ENCODE measurements at regions of chr14 and their contacts with region 1.

Region 1: GRCh38 chr14:64294672-64295413 is 672 bp upstream of the ESR2 start:
- DNase-seq: peak; percentile 90
- H3K4me3 ChIP-seq: peak overlapping the region; percentile 45
- H3K27ac ChIP-seq: no peak overlapping the region
- H3K4me1 ChIP-seq: peaks cover 28% of the 10 kb centered on the region
- CTCF ChIP-seq: peak; percentile 98

Region 2: DNA sequence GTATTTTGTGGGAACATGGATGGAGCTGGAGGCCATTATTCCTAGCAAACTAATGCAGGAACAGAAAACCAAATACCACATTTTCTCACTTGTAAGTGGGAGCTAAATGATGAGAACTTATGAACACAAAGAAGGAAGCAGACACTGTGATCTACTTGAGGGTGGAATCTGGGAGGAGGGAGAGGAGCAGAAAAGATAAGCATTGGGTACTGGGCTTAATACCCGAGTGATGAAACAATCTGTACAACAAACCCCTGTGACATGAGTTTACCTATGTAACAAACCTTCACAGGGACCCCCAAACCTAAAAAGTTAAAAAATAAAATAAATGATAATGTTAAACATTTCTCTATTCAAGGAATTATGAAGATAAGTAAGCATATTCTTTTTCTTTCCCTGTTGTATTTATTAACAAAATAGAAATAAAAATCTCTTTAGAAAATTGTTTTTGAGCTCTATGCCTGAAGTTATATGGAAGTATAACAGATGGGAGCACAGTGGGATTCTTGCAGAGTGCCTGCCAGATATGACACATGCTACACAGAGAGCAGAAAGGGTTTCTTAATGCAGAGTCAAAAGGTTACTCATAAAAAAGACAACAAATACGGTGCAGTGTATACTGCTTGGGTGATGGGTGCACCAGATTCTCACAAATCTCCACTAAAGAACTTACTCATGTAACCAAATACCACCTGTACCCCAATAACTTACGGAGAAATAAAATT is 494.0 kb before region 1 on chr14:
- CTCF ChIA-PET with region 1: no interaction called
- POLR2A ChIA-PET with region 1: interaction called, 6 read pairs
- intact Hi-C with region 1: loop called (anchors 2 kb)
- DNase-seq: no peak
- H3K4me3 ChIP-seq: no peak overlapping the region
- H3K27ac ChIP-seq: no peak overlapping the region
- H3K4me1 ChIP-seq: peaks cover 9% of the 10 kb centered on the region
- CTCF ChIP-seq: no peak

Region 3: GRCh38 chr14:64137657-64138290 is 157.1 kb before region 1 on chr14:
- CTCF ChIA-PET with region 1: no interaction called
- POLR2A ChIA-PET with region 1: no interaction called
- intact Hi-C with region 1: loop called (anchors 2 kb)
- DNase-seq: peak; percentile 11
- H3K4me3 ChIP-seq: no peak overlapping the region
- H3K27ac ChIP-seq: no peak overlapping the region
- H3K4me1 ChIP-seq: no peaks in the 10 kb centered on the region
- CTCF ChIP-seq: peak; percentile 61; the same call in 1 of the 2 replicates

Region 4: GRCh38 chr14:64184103-64184729 is 110.6 kb before region 1 on chr14:
- CTCF ChIA-PET with region 1: no interaction called
- POLR2A ChIA-PET with region 1: no interaction called
- intact Hi-C with region 1: no loop called
- DNase-seq: no peak
- H3K4me3 ChIP-seq: no peak overlapping the region
- H3K27ac ChIP-seq: no peak overlapping the region
- H3K4me1 ChIP-seq: no peaks in the 10 kb centered on the region
- CTCF ChIP-seq: no peak

Region 5: DNA sequence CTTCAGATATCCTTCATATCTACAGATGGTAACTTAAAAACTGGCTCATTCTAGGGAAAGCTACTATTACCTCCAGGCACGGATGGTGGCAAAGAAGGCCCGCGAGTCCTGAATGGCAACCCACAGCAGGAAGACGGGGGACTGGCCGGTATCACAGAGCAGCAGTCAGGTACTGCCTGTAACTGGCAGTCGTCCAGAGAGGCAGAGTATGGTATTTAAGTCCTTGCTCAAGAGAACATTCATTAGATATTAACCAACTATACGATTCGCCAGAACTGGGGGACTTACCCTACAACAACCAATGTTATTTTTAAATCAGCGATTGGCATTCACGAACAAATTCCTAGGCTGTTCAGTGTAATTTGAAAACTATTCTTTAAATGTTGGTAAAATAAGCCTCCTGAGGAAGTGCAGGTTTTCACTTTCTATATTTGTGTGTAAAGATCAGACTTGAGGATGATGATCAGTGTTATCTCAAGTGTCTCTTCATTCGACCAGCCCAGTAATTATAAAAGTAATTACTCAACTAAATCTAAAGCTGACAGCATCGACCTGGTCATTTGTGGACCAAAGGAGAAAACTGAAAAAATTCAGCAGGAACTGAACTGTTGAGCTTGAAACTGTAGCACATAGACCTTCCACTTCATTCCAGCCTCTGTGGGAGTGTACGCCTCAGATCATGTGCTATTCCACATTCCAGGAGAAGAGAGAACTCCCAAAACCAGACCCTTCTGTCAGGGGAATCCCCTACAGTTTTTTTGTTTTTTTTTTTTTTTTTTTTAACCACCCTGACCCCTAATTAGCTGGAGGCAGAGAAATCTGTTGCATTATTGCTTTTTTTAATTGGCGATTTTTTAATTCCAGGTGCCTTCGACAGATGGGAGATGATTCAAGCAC is 76.3 kb before region 1 on chr14:
- CTCF ChIA-PET with region 1: no interaction called
- POLR2A ChIA-PET with region 1: no interaction called
- intact Hi-C with region 1: loop called (anchors 5 kb)
- DNase-seq: no peak
- H3K4me3 ChIP-seq: no peak overlapping the region
- H3K27ac ChIP-seq: peak overlapping the region; percentile 56
- H3K4me1 ChIP-seq: peaks cover 23% of the 10 kb centered on the region
- CTCF ChIP-seq: no peak

Region 6: DNA sequence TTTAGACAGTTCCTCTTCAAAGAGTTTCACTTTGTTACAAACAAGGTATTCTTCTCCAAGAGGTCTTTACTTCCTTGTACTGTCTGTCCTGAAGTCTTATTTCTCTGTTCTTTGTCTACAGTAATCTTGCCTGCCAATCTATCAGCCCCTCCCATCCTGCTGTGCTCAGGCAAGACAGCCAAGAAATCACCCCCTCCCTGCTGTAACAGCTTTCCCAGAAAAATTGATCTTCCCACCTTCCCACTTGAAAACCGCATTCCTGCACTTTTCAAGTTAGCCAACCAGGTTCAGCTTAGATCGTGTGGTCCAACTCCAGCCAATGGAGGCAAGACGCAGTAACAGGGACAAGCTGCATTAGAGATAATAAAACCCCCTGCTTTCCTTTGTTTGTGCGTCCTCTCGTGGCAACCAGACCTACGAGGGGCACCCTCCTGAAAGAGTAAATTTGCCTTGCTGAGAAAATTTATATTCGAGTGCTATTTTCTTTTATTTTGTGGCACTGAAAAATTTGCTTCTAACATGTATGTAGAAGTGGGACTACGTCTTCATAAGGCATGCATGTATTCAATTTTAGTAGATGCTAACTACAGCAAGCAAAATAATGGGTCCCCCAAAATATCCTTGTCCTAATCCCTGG is 45.8 kb after region 1 on chr14:
- CTCF ChIA-PET with region 1: no interaction called
- POLR2A ChIA-PET with region 1: no interaction called
- intact Hi-C with region 1: no loop called
- DNase-seq: peak; percentile 43
- H3K4me3 ChIP-seq: no peak overlapping the region
- H3K27ac ChIP-seq: no peak overlapping the region
- H3K4me1 ChIP-seq: peaks cover 24% of the 10 kb centered on the region
- CTCF ChIP-seq: no peak

Region 7: GRCh38 chr14:64434528-64434927 is 139.7 kb after region 1 on chr14:
- CTCF ChIA-PET with region 1: no interaction called
- POLR2A ChIA-PET with region 1: no interaction called
- intact Hi-C with region 1: no loop called
- DNase-seq: no peak
- H3K4me3 ChIP-seq: no peak overlapping the region
- H3K27ac ChIP-seq: no peak overlapping the region
- H3K4me1 ChIP-seq: no peaks in the 10 kb centered on the region
- CTCF ChIP-seq: no peak